CD8-positive, alpha-beta T cell (primary cell): ENCODE measurements at regions of chr10 and their contacts with region 1.

Region 1: GRCh38 chr10:103712570-103713498 is 142.5 kb downstream of the SH3PXD2A start:
- DNase-seq: peak; percentile 68 to 88 (median 80)
- ATAC-seq: peak; percentile 97
- H3K4me3 ChIP-seq: no peak overlapping the region
- H3K4me3 Mint-ChIP-seq: no peak overlapping the region
- H3K27ac ChIP-seq: no peak overlapping the region
- H3K27ac Mint-ChIP-seq: no peak overlapping the region
- H3K4me1 ChIP-seq: no peaks in the 10 kb centered on the region
- H3K4me1 Mint-ChIP-seq: no peaks in the 10 kb centered on the region
- H3K27me3 ChIP-seq: no peaks in the 10 kb centered on the region
- H3K27me3 Mint-ChIP-seq: no peaks in the 10 kb centered on the region
- CTCF ChIP-seq: peak; percentile 92

Region 2: DNA sequence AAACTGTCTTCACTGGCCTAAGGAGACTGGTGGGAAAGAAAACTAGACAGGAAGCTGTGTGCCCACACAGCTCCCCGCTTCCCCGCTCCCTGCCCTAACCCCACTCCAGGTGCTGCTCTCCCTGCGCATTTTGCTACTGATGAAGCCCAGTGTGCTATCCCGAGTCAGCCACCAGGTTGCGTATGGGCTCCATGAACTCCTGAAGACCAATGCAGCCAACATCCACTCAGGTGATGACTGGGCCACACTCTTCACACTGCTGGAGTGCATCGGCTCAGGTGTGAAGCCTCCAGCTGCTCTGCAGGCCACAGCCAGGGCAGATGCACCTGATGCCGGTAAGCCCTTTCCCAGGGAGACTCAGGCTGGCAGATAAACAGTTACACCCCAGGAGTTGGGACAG is 1337.6 kb before region 1 on chr10:
- CTCF ChIA-PET with region 1: no interaction called
- POLR2A ChIA-PET with region 1: no interaction called
- intact Hi-C with region 1: no loop called
- DNase-seq: peak in 3 of 9 experiments; percentile 31 to 43 (median 37)
- ATAC-seq: no peak
- H3K4me3 ChIP-seq: no peak overlapping the region
- H3K4me3 Mint-ChIP-seq: no peak overlapping the region
- H3K27ac ChIP-seq: no peak overlapping the region
- H3K27ac Mint-ChIP-seq: no peak overlapping the region
- H3K4me1 ChIP-seq: no peaks in the 10 kb centered on the region
- H3K4me1 Mint-ChIP-seq: no peaks in the 10 kb centered on the region
- H3K27me3 ChIP-seq: no peaks in the 10 kb centered on the region
- H3K27me3 Mint-ChIP-seq: no peaks in the 10 kb centered on the region
- CTCF ChIP-seq: no peak

Region 3: GRCh38 chr10:103554488-103555324 is 158.1 kb before region 1 on chr10:
- CTCF ChIA-PET with region 1: no interaction called
- POLR2A ChIA-PET with region 1: no interaction called
- intact Hi-C with region 1: no loop called
- DNase-seq: peak in 1 of 9 experiments; percentile 31
- ATAC-seq: peak; percentile 44
- H3K4me3 ChIP-seq: no peak overlapping the region
- H3K4me3 Mint-ChIP-seq: peak overlapping the region; percentile 79
- H3K27ac ChIP-seq: no peak overlapping the region
- H3K27ac Mint-ChIP-seq: no peak overlapping the region
- H3K4me1 ChIP-seq: peaks cover 14% of the 10 kb centered on the region
- H3K4me1 Mint-ChIP-seq: peaks cover 12% of the 10 kb centered on the region
- H3K27me3 ChIP-seq: peaks cover 0 to 2% of the 10 kb centered on the region in 2 experiments
- H3K27me3 Mint-ChIP-seq: peaks cover 26% of the 10 kb centered on the region
- CTCF ChIP-seq: no peak

Region 4: DNA sequence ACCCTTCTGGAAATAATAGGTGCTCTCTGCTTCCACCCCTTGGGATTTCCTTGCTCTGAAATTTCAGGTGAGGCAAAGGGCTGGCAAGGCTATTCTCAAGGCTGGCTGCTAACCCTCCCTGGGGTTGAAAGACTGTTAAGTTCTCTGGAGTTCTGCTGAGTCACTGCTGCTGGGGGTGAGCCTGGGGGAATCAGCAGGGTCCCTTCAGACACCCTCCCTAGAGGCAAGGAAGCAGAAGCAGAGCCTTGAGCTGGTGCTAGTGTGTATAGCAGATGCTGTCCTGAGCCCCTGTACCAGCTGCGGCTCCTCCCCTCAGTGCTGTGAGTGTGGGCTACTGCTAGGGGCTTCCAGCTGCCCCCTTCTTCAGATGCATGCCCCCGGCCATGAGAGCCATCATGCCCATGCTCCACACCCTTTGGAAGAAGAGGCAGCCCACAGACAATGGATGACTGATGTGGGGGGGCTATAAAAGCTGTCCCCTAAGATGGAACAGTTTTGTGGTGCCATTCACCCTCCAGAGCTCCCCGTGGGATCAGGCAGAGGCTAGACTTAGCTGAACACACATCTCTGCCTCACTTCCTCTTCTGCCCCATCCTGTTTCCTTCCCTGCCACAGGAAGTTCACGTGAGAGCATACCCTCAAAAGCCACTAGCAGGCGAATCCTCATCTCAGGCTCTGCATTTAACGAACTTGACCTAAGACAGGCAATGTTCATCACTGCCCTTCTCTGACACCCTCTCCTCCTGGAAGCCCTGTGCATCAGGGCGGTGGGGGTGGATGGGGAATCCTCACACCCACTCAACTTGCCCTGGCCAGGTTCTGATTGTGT is 50.8 kb after region 1 on chr10:
- CTCF ChIA-PET with region 1: interaction called, 10 read pairs
- POLR2A ChIA-PET with region 1: no interaction called
- intact Hi-C with region 1: no loop called
- DNase-seq: peak in 5 of 9 experiments; percentile 16 to 62 (median 40)
- ATAC-seq: peak; percentile 16
- H3K4me3 ChIP-seq: peak overlapping the region; percentile 7 to 21
- H3K4me3 Mint-ChIP-seq: peak overlapping the region; percentile 51
- H3K27ac ChIP-seq: peak overlapping the region in 1 of 2 experiments; percentile 28
- H3K27ac Mint-ChIP-seq: peak overlapping the region; percentile 83
- H3K4me1 ChIP-seq: peaks cover 60% of the 10 kb centered on the region
- H3K4me1 Mint-ChIP-seq: peaks cover 75% of the 10 kb centered on the region
- H3K27me3 ChIP-seq: no peaks in the 10 kb centered on the region
- H3K27me3 Mint-ChIP-seq: no peaks in the 10 kb centered on the region
- CTCF ChIP-seq: no peak

Region 5: DNA sequence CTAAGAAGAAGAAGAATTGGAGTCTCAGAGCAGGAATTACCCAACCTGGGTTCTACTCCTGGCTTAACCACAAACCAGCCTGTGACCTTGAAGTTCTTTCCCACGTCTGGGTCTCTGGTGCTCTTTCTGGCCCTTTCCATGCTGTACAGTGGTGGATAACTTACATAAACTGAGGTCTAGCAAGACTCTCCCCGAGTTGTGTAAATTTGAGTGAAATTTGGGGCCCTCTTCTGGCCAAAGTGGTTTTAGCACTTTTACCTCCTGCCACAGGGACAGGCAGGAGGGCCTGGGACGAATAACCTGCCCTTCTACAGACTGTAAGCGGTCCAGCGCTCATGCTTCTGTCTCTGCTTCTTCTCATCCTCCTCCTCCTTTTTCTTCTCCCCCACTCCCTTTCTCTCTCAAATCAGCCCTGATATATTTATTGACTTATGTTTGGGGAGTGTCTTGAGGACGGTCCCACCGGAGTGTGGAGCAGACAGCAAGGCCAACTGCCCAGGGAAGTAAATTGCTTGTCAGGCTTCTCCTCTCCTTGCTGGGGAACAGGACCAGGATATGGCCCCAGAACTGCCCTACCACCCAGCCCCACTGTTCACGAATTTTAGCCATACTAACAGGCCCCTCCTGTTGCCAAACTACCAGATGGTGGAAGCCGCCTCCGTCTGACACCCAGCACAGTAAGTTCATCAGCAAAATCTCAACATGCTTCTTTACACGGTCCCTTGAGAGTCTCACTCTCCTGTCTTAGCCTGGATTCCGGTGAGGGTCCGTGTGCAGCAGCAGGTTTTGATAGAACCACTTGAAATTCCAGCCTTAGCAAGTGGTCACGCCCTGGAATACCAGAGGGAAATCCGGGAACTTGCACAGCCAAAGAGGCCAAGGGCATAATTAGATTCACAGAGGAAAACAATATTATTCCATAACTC is 146.6 kb after region 1 on chr10:
- CTCF ChIA-PET with region 1: interaction called, 121 read pairs
- POLR2A ChIA-PET with region 1: interaction called, 5 read pairs
- intact Hi-C with region 1: loop called (anchors 1 kb)
- DNase-seq: peak; percentile 29 to 70 (median 54)
- ATAC-seq: peak; percentile 67
- H3K4me3 ChIP-seq: no peak overlapping the region
- H3K4me3 Mint-ChIP-seq: no peak overlapping the region
- H3K27ac ChIP-seq: no peak overlapping the region
- H3K27ac Mint-ChIP-seq: no peak overlapping the region
- H3K4me1 ChIP-seq: peaks cover 7% of the 10 kb centered on the region
- H3K4me1 Mint-ChIP-seq: peaks cover 9% of the 10 kb centered on the region
- H3K27me3 ChIP-seq: peaks cover 0 to 7% of the 10 kb centered on the region in 2 experiments
- H3K27me3 Mint-ChIP-seq: peaks cover 17% of the 10 kb centered on the region
- CTCF ChIP-seq: peak; percentile 67

Region 6: DNA sequence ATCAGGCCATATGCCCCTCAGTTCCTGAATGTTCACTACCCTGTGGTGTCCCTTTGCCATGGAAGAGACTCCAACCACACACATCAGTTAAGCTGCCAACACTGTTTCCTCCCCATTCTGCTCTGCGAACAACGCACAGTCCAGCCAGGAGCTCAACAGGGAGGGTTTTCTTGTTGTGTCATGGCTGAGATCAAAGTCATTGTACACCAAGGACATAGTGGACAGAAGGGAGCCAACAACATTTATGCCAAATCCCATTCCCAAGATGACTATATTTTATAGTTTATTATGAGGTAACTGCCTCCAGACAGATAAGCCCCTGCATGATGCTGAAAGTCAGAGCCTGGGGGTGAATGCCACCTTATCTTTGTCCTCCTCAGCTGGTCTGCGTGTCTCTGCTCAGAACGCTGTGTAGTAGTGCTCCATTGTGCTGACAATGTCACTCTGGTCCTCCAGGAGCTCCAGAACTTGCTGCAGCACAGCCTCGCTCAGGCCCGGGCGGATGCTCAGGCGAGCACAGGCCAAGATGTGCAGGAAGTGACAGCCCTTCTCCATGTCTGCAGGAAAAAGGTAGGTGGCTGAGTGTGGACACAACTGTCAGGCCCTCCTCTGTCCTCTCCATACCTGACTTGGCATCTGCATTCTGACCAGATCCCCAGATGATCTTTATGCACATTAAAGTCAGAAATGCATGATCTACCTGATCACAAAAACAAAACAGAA is 169.6 kb after region 1 on chr10:
- CTCF ChIA-PET with region 1: interaction called, 48 read pairs
- POLR2A ChIA-PET with region 1: no interaction called
- intact Hi-C with region 1: loop called (anchors 1 kb)
- DNase-seq: no peak
- ATAC-seq: no peak
- H3K4me3 ChIP-seq: no peak overlapping the region
- H3K4me3 Mint-ChIP-seq: no peak overlapping the region
- H3K27ac ChIP-seq: no peak overlapping the region
- H3K27ac Mint-ChIP-seq: no peak overlapping the region
- H3K4me1 ChIP-seq: no peaks in the 10 kb centered on the region
- H3K4me1 Mint-ChIP-seq: peaks cover 4% of the 10 kb centered on the region
- H3K27me3 ChIP-seq: no peaks in the 10 kb centered on the region
- H3K27me3 Mint-ChIP-seq: no peaks in the 10 kb centered on the region
- CTCF ChIP-seq: no peak

Region 7: GRCh38 chr10:104209575-104210198 is 496.9 kb after region 1 on chr10:
- CTCF ChIA-PET with region 1: interaction called, 7 read pairs
- POLR2A ChIA-PET with region 1: no interaction called
- intact Hi-C with region 1: loop called in 1 of 2 experiments (anchors 2 kb)
- DNase-seq: peak in 7 of 9 experiments; percentile 10 to 65 (median 45)
- ATAC-seq: peak; percentile 71
- H3K4me3 ChIP-seq: no peak overlapping the region
- H3K4me3 Mint-ChIP-seq: no peak overlapping the region
- H3K27ac ChIP-seq: no peak overlapping the region
- H3K27ac Mint-ChIP-seq: no peak overlapping the region
- H3K4me1 ChIP-seq: no peaks in the 10 kb centered on the region
- H3K4me1 Mint-ChIP-seq: no peaks in the 10 kb centered on the region
- H3K27me3 ChIP-seq: no peaks in the 10 kb centered on the region
- H3K27me3 Mint-ChIP-seq: peaks cover 14% of the 10 kb centered on the region
- CTCF ChIP-seq: peak; percentile 54

Region 8: DNA sequence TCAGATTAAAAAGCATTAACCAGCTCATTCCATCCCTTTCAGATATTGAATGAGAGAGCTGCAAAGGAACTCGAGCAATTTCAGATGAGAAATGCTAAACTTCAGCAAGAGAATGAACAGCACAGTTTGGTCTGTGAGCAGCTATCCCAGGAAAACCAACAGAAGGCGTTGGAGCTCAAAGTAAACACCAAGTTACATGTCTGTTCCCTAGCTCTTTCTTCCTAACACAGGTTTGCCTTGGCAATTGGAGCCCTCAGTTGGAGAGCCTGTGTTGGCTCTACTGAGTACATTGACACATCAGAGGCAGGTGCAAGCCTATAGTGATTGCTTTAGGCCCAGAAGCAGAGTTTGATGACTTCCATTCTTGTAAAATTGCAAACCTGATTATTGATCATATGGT is 655.5 kb after region 1 on chr10:
- CTCF ChIA-PET with region 1: no interaction called
- POLR2A ChIA-PET with region 1: no interaction called
- intact Hi-C with region 1: loop called in 1 of 2 experiments (anchors 10 kb)
- DNase-seq: no peak
- ATAC-seq: no peak
- H3K4me3 ChIP-seq: no peak overlapping the region
- H3K4me3 Mint-ChIP-seq: no peak overlapping the region
- H3K27ac ChIP-seq: no peak overlapping the region
- H3K27ac Mint-ChIP-seq: no peak overlapping the region
- H3K4me1 ChIP-seq: no peaks in the 10 kb centered on the region
- H3K4me1 Mint-ChIP-seq: no peaks in the 10 kb centered on the region
- H3K27me3 ChIP-seq: no peaks in the 10 kb centered on the region
- H3K27me3 Mint-ChIP-seq: peaks cover 37% of the 10 kb centered on the region
- CTCF ChIP-seq: no peak